Activated T-helper 1 cell treated with anti-CD3 and anti-CD28 coated beads, Interleukin-12 subunit alpha, Interleukin-12 subunit beta, Interleukin-2, Interleukin-4 antibody, amounts not matched to agents 30 ng/mL and 10 ng/mL and 1 ng/mL, durations not matched to agents 14 hours and 24 hours and 36 hours (primary cell): ENCODE measurements at regions of chr6 and their contacts with region 1.

Region 1: GRCh38 chr6:141309295-141309694 is 823.4 kb upstream of the GJE1 start:
- DNase-seq: no peak
- H3K4me3 Mint-ChIP-seq: no peak overlapping the region
- H3K27ac Mint-ChIP-seq: no peak overlapping the region
- H3K4me1 Mint-ChIP-seq: no peaks in the 10 kb centered on the region
- H3K27me3 Mint-ChIP-seq: no peaks in the 10 kb centered on the region

Region 2: GRCh38 chr6:141088171-141088570 is 221.1 kb before region 1 on chr6:
- intact Hi-C with region 1: no loop called
- DNase-seq: no peak
- H3K4me3 Mint-ChIP-seq: no peak overlapping the region
- H3K27ac Mint-ChIP-seq: no peak overlapping the region
- H3K4me1 Mint-ChIP-seq: no peaks in the 10 kb centered on the region
- H3K27me3 Mint-ChIP-seq: peaks cover 3% of the 10 kb centered on the region

Region 3: GRCh38 chr6:141282263-141282662 is 27.0 kb before region 1 on chr6:
- intact Hi-C with region 1: loop called (anchors 1 kb)
- DNase-seq: no peak
- H3K4me3 Mint-ChIP-seq: no peak overlapping the region
- H3K27ac Mint-ChIP-seq: no peak overlapping the region
- H3K4me1 Mint-ChIP-seq: no peaks in the 10 kb centered on the region
- H3K27me3 Mint-ChIP-seq: peaks cover 2% of the 10 kb centered on the region

Region 4: GRCh38 chr6:141634269-141634668 is 325.0 kb after region 1 on chr6:
- intact Hi-C with region 1: no loop called
- DNase-seq: no peak
- H3K4me3 Mint-ChIP-seq: no peak overlapping the region
- H3K27ac Mint-ChIP-seq: no peak overlapping the region
- H3K4me1 Mint-ChIP-seq: no peaks in the 10 kb centered on the region
- H3K27me3 Mint-ChIP-seq: no peaks in the 10 kb centered on the region